Gastrocnemius medialis (tissue), 4 donors: ENCODE measurements at regions of chr11 and their contacts with region 1.

Region 1: GRCh38 chr11:114059278-114059983 is at the start of gene ZBTB16:
- DNase-seq: peak; percentile 88 to 91
- ATAC-seq: peak; percentile 22 to 28
- H3K4me3 ChIP-seq: peak within 1 kb of the TSS; percentile 68 to 100 (median 82)
- H3K27ac ChIP-seq: peak within 1 kb of the TSS; percentile 94 to 99 (median 96)
- H3K4me1 ChIP-seq: peaks cover 31 to 55% of the 10 kb centered on the region in 2 donors
- H3K27me3 ChIP-seq: no peaks in the 10 kb centered on the region
- CTCF ChIP-seq: peak in 3 of 5 experiments; percentile 41 to 76 (median 49)
- POLR2A ChIP-seq: peak; percentile 93 to 98
- total RNA-seq, gene ZBTB16: 156 to 250 (median 196) TPM

Region 2: DNA sequence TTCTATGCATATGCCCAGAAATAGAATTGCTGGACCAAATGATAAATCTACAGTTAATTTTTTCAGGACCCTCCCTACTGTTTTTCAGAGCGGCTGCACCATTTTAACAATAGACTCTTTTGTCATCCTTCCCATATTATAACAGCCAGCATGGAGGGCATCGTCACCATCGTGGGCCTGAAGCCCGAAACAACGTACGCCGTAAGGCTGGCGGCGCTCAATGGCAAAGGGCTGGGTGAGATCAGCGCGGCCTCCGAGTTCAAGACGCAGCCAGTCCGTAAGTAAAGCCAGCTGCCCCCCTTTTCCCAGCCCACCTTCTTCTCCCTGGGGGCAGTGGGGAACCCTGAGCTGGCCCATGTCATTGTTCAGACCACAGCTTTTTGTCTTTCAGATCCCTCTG is 824.5 kb before region 1 on chr11:
- in situ Hi-C with region 1: no loop called
- intact Hi-C with region 1: no loop called
- DNase-seq: no peak
- ATAC-seq: no peak
- H3K4me3 ChIP-seq: no peak overlapping the region
- H3K27ac ChIP-seq: no peak overlapping the region
- H3K4me1 ChIP-seq: no peaks in the 10 kb centered on the region
- H3K27me3 ChIP-seq: no peaks in the 10 kb centered on the region
- CTCF ChIP-seq: no peak
- POLR2A ChIP-seq: no peak

Region 3: GRCh38 chr11:114197799-114198500 is 138.5 kb after region 1 on chr11:
- in situ Hi-C with region 1: no loop called
- intact Hi-C with region 1: loop called (anchors 2 kb)
- DNase-seq: peak; percentile 91 to 96
- ATAC-seq: peak; percentile 65 to 68
- H3K4me3 ChIP-seq: peak overlapping the region in 2 of 4 donors; percentile 11 to 23
- H3K27ac ChIP-seq: peak overlapping the region; percentile 90 to 99 (median 96)
- H3K4me1 ChIP-seq: peaks cover 95 to 98% of the 10 kb centered on the region in 2 donors
- H3K27me3 ChIP-seq: no peaks in the 10 kb centered on the region
- CTCF ChIP-seq: no peak
- POLR2A ChIP-seq: peak; percentile 80 to 96

Region 4: DNA sequence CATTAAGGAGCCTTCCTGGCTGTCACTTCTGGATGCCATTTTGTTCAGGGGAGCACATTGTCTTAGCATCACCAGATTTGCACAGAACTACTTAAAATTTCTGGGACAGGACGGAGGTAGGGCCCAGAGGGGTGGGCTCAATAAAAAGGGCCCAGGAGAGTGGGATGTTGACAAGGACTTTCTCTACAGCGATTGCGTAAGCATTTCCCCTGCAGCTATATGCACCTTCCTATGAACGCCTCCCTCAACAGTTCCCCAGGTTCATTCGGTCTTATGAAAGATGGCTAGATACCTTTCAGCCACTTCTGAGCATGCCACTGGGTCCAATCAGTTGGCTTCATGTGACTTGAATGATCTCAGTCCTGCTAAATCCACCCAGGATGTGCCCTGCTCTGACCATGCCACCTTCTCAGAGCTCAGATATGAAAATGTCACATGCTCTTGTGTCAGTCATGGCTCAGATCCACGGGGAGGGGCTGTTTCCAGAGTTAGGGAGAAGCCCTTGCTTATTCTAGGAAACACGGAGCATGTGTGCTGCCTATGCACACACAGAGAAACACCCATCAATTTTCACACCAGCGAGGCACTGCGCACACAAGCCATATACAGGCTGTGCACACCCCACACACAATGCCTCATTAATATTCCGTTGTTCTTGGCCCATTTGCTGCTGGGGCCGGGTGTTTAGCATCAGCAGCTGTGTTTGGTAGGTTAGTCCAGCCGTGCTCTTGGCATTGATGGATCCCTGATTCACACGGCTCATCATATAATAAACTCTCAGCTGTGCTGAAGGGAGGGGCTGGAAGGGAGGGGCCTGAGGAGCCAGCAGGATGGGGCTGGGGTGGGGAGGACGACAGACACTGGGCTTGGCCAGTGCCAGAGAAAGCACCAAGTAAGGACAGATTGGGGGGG is 184.3 kb after region 1 on chr11:
- in situ Hi-C with region 1: loop called in 1 of 4 experiments (anchors 10 kb)
- intact Hi-C with region 1: loop called (anchors 5 kb)
- DNase-seq: peak; percentile 73 to 76
- ATAC-seq: peak; percentile 51 to 67
- H3K4me3 ChIP-seq: no peak overlapping the region
- H3K27ac ChIP-seq: peak overlapping the region; percentile 90 to 99 (median 96)
- H3K4me1 ChIP-seq: peaks cover 79% of the 10 kb centered on the region in 2 donors
- H3K27me3 ChIP-seq: no peaks in the 10 kb centered on the region
- CTCF ChIP-seq: no peak
- POLR2A ChIP-seq: peak in 1 of 2 donors; percentile 23

Region 5: GRCh38 chr11:114257621-114258558 is 198.5 kb after region 1 on chr11:
- in situ Hi-C with region 1: no loop called
- intact Hi-C with region 1: loop called (anchors 2 kb)
- DNase-seq: peak; percentile 63 to 84
- ATAC-seq: peak; percentile 8 to 18
- H3K4me3 ChIP-seq: peak overlapping the region in 2 of 4 donors; percentile 17 to 26
- H3K27ac ChIP-seq: peak overlapping the region; percentile 87 to 98 (median 95)
- H3K4me1 ChIP-seq: peaks cover 67 to 89% of the 10 kb centered on the region in 2 donors
- H3K27me3 ChIP-seq: no peaks in the 10 kb centered on the region
- CTCF ChIP-seq: peak in 2 of 5 experiments; percentile 38 to 40
- POLR2A ChIP-seq: peak in 1 of 2 donors; percentile 12